Breast epithelium (tissue), 4 donors: ENCODE measurements at regions of chr5 and their contacts with region 1.

Region 1: DNA sequence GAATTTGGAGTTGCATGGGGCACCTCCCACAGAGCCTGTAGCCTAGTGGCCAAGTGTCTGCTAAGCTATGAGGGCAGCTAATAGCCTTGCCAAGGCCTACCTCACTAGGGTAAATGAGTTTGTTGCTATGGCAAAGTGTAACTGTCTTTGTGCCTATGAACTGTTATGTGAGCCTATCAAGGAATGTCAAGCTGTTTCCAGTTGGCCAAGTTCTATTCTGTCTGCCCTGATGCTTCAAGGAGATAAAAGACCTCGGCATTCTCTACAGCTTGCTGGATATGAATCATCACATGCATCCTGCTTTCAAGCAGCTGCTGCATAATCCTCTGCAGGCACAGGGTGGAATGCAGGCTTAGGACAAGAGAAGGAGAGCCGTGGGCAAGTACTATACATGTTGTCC is 69.8 kb upstream of the CCDC112 start:
- DNase-seq: no peak
- H3K4me3 ChIP-seq: no peak overlapping the region
- H3K27ac ChIP-seq: no peak overlapping the region
- H3K4me1 ChIP-seq: no peaks in the 10 kb centered on the region
- H3K27me3 ChIP-seq: no peaks in the 10 kb centered on the region
- CTCF ChIP-seq: no peak
- POLR2A ChIP-seq: no peak

Region 2: GRCh38 chr5:115309751-115310370 is 56.4 kb before region 1 on chr5:
- intact Hi-C with region 1: loop called (anchors 2 kb)
- DNase-seq: no peak
- H3K4me3 ChIP-seq: no peak overlapping the region
- H3K27ac ChIP-seq: no peak overlapping the region
- H3K4me1 ChIP-seq: no peaks in the 10 kb centered on the region
- H3K27me3 ChIP-seq: no peaks in the 10 kb centered on the region
- CTCF ChIP-seq: peak; percentile 52 to 84 (median 78)
- POLR2A ChIP-seq: no peak

Region 3: GRCh38 chr5:115392611-115393010 is 26.4 kb after region 1 on chr5:
- intact Hi-C with region 1: loop called (anchors 1 kb)
- DNase-seq: no peak
- H3K4me3 ChIP-seq: no peak overlapping the region
- H3K27ac ChIP-seq: no peak overlapping the region
- H3K4me1 ChIP-seq: no peaks in the 10 kb centered on the region
- H3K27me3 ChIP-seq: no peaks in the 10 kb centered on the region
- CTCF ChIP-seq: no peak
- POLR2A ChIP-seq: no peak

Region 4: DNA sequence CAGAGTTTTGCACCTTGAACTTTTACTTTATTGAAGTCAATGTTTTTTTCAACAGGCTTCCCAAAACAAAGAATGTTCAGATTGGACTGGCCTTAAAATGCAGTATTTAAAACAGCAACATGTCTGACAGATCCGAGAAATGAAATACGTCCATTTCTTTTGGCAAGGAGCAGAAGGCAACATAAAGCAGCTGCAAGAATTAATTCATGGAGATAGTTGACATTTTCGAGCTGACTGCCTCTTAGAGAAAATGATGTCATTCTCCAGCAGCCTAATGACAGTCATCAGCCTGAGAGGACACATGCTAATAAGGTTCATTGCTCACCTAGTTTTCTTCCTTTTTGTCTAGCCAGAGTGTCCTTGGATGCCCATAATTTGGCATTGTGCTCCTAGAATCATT is 1440.6 kb after region 1 on chr5:
- intact Hi-C with region 1: loop called (anchors 10 kb)
- DNase-seq: no peak
- H3K4me3 ChIP-seq: no peak overlapping the region
- H3K27ac ChIP-seq: no peak overlapping the region
- H3K4me1 ChIP-seq: no peaks in the 10 kb centered on the region
- H3K27me3 ChIP-seq: no peaks in the 10 kb centered on the region
- CTCF ChIP-seq: no peak
- POLR2A ChIP-seq: no peak